ENCODE measurements at regions of chr20 and their contacts with region 1.

Region 1: GRCh38 chr20:17682103-17682888 is at the start of gene RRBP1:
- DNase-seq: peak; percentile 97
- H3K4me3 Mint-ChIP-seq: peak within 1 kb of the TSS; percentile 81
- H3K27ac Mint-ChIP-seq: peak within 1 kb of the TSS; percentile 61
- H3K4me1 Mint-ChIP-seq: peaks cover 11% of the 10 kb centered on the region
- H3K27me3 Mint-ChIP-seq: peaks cover 41% of the 10 kb centered on the region
- CTCF ChIP-seq: peak; percentile 65
- total RNA-seq, gene RRBP1: 203 and 244 TPM in 2 replicates

Region 2: DNA sequence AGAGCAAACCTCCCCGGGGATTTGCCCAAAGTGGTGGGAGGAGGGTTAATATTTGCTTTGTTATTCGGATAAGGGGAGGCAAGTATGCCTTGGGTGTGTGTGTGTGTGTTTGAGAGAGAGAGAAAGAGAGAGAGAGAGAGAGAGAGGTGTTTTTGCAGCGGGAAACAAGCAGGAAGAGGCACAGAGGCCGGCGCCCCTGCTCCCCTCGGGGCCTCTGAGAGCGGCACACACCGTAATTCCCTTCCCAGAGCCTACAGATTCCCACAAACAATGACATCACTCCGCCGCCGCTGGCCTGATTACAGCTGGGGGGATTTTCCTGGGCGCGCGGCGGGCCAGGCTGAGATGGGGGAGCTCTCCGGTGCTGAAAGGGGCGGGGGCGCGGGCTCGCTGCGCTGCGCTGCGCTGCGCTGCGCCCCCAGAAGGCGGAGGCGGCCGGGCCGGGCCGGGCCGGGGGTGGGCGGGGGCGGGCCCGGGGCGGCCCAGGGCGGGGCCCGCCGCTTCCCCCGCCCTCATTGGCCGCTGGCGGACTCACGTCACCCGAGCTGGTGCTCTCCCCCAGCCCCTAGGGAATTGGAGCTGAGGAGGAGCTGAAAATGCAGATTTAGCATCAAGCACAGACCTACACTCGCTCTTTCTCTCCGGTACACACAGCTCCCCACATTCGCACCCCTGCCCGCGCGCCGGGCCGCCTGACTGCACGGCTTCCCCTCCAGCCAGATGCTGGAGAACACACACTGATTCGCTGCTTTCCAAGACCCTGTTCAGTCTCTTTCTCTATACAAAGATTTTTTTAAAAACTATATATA is 455.7 kb before region 1 on chr20 and contains the start of gene PCSK2:
- CTCF ChIA-PET with region 1: no interaction called
- POLR2A ChIA-PET with region 1: no interaction called
- intact Hi-C with region 1: no loop called
- DNase-seq: no peak
- H3K4me3 Mint-ChIP-seq: no peak within 1 kb of the TSS
- H3K27ac Mint-ChIP-seq: no peak within 1 kb of the TSS
- H3K4me1 Mint-ChIP-seq: no peaks in the 10 kb centered on the region
- H3K27me3 Mint-ChIP-seq: peaks cover 81% of the 10 kb centered on the region
- CTCF ChIP-seq: no peak
- total RNA-seq, gene PCSK2: not detected in 2 replicates

Region 3: GRCh38 chr20:17536944-17537444 is 145.3 kb before region 1 on chr20:
- CTCF ChIA-PET with region 1: interaction called, 10 read pairs
- POLR2A ChIA-PET with region 1: interaction called, 5 read pairs
- intact Hi-C with region 1: loop called (anchors 1 kb)
- DNase-seq: peak; percentile 83
- H3K4me3 Mint-ChIP-seq: no peak overlapping the region
- H3K27ac Mint-ChIP-seq: no peak overlapping the region
- H3K4me1 Mint-ChIP-seq: peaks cover 20% of the 10 kb centered on the region
- H3K27me3 Mint-ChIP-seq: no peaks in the 10 kb centered on the region
- CTCF ChIP-seq: peak; percentile 84

Region 4: DNA sequence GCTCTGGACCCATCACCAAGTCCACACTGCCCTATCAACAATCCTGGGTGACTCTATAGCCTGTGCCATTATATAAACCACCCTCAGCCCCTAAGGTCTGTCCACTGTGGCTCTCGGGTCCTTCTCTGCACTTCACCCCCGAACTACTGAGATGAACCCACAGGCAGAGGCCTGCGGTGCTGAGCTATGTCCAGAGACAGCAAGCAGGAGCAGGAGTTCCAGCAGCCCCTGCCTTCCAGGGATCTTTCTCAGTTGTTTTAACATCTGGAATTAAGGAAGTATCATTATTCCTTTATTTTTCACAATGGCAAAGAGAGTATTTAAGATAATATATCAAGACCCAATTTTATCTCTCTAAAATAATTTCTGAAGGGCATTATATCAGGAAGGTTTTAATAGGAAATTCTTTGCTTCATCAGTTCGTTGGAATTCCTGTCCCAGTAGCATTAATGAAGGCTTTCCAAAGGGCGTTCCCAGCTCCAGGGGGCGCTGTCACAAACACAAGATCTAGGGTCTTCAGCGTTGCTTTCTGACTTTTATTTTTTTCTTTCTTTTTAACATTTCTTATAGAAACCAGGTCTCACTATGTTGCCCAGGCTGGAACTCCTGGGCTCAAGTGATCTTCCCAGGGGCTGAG is 27.5 kb before region 1 on chr20:
- CTCF ChIA-PET with region 1: interaction called, 13 read pairs
- POLR2A ChIA-PET with region 1: no interaction called
- intact Hi-C with region 1: no loop called
- DNase-seq: peak; percentile 39
- H3K4me3 Mint-ChIP-seq: no peak overlapping the region
- H3K27ac Mint-ChIP-seq: no peak overlapping the region
- H3K4me1 Mint-ChIP-seq: peaks cover 15% of the 10 kb centered on the region
- H3K27me3 Mint-ChIP-seq: no peaks in the 10 kb centered on the region
- CTCF ChIP-seq: peak; percentile 44

Region 5: DNA sequence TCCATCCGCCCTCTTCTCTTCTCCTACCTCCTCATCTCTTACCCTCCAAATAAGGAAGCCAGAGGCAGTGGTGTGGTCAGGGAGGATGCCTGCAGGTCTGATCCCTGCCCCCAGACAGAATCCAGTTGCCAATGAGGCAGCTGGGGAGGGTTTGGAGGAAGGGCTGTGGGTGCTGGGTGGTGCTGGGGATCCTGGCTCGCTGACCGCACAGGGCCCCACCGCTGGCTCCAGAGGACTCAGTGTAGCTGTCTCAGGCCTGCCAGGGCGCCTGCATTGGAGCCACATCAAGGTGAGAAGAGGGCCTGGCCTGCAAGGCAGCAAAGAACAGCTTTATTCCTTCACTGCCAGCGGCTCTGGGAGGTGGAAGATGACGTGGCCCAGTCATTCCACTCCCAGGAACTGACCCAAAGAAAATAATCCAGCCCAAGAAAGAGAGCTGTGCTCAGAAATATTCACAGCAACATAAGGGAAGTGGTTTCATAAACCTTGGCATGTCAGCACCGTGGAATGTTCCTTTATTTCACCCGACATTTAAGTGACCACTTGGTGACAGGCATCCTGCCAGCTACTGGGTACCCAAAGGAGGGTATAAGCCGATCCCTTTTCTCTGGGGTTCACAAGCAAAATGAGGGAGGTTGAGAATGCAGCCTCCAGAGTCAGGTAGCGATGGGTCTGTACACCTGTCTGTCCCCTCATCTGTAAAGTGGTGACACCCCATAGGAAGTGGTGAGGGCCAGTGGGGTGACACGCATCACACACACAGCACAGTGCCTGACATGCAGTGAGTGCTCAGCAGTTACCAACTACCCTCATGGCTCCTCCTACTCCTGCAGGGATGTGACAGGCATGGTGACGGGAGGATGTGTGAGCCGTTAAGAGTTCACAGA is 161.2 kb after region 1 on chr20:
- CTCF ChIA-PET with region 1: interaction called, 7 read pairs
- POLR2A ChIA-PET with region 1: interaction called, 18 read pairs
- intact Hi-C with region 1: loop called (anchors 2 kb)
- DNase-seq: peak; percentile 95
- H3K4me3 Mint-ChIP-seq: peak overlapping the region; percentile 48
- H3K27ac Mint-ChIP-seq: peak overlapping the region; percentile 93
- H3K4me1 Mint-ChIP-seq: peaks cover 59% of the 10 kb centered on the region
- H3K27me3 Mint-ChIP-seq: no peaks in the 10 kb centered on the region
- CTCF ChIP-seq: no peak

Region 6: GRCh38 chr20:17873410-17874270 is 191.3 kb after region 1 on chr20:
- CTCF ChIA-PET with region 1: interaction called, 8 read pairs
- POLR2A ChIA-PET with region 1: interaction called, 20 read pairs
- intact Hi-C with region 1: no loop called
- DNase-seq: peak; percentile 91
- H3K4me3 Mint-ChIP-seq: peak overlapping the region; percentile 46
- H3K27ac Mint-ChIP-seq: peak overlapping the region; percentile 29
- H3K4me1 Mint-ChIP-seq: peaks cover 24% of the 10 kb centered on the region
- H3K27me3 Mint-ChIP-seq: no peaks in the 10 kb centered on the region
- CTCF ChIP-seq: no peak

Region 7: GRCh38 chr20:17995967-17996819 is 313.9 kb after region 1 on chr20:
- CTCF ChIA-PET with region 1: interaction called, 6 read pairs
- POLR2A ChIA-PET with region 1: interaction called, 6 read pairs
- intact Hi-C with region 1: loop called (anchors 1 kb)
- DNase-seq: peak; percentile 75
- H3K4me3 Mint-ChIP-seq: no peak overlapping the region
- H3K27ac Mint-ChIP-seq: no peak overlapping the region
- H3K4me1 Mint-ChIP-seq: peaks cover 14% of the 10 kb centered on the region
- H3K27me3 Mint-ChIP-seq: no peaks in the 10 kb centered on the region
- CTCF ChIP-seq: peak; percentile 89